ENCODE measurements at regions of chr5 and their contacts with region 1.

Region 1: GRCh38 chr5:81851481-81852178 is 100.7 kb upstream of the SSBP2 start:
- DNase-seq: peak; percentile 84
- ATAC-seq: peak; percentile 82
- H3K4me3 ChIP-seq: peak overlapping the region; percentile 42 to 56
- H3K27ac ChIP-seq: peak overlapping the region; percentile 81
- H3K4me1 ChIP-seq: peaks cover 40 to 52% of the 10 kb centered on the region in 2 experiments
- H3K27me3 ChIP-seq: no peaks in the 10 kb centered on the region
- CTCF ChIP-seq: no peak
- POLR2A ChIP-seq: peak; percentile 47
- RAD21 ChIP-seq: peak; percentile 35

Region 2: GRCh38 chr5:81425569-81425968 is 426.1 kb before region 1 on chr5:
- CTCF ChIA-PET with region 1: interaction called, 6 read pairs
- POLR2A ChIA-PET with region 1: no interaction called
- RAD21 ChIA-PET with region 1: no interaction called
- intact Hi-C with region 1: loop called (anchors 5 kb)
- DNase-seq: peak; percentile 28
- ATAC-seq: peak; percentile 67; the same call in 1 of the 2 replicates
- H3K4me3 ChIP-seq: no peak overlapping the region
- H3K27ac ChIP-seq: no peak overlapping the region
- H3K4me1 ChIP-seq: peaks cover 0 to 3% of the 10 kb centered on the region in 2 experiments; a peak in 2 of 4 replicates
- H3K27me3 ChIP-seq: no peaks in the 10 kb centered on the region
- CTCF ChIP-seq: peak; percentile 39 to 64 (median 54); a peak in 4 of 6 replicates
- POLR2A ChIP-seq: no peak
- RAD21 ChIP-seq: peak; percentile 61

Region 3: GRCh38 chr5:81506900-81507588 is 344.6 kb before region 1 on chr5:
- CTCF ChIA-PET with region 1: interaction called, 4 read pairs
- POLR2A ChIA-PET with region 1: interaction called, 5 read pairs
- RAD21 ChIA-PET with region 1: interaction called in 1 of 2 experiments, 7 read pairs
- intact Hi-C with region 1: loop called (anchors 1 kb)
- DNase-seq: peak; percentile 77
- ATAC-seq: peak; percentile 99
- H3K4me3 ChIP-seq: no peak overlapping the region
- H3K27ac ChIP-seq: no peak overlapping the region
- H3K4me1 ChIP-seq: peaks cover 0 to 5% of the 10 kb centered on the region in 2 experiments; a peak in 2 of 4 replicates
- H3K27me3 ChIP-seq: no peaks in the 10 kb centered on the region
- CTCF ChIP-seq: peak; percentile 76 to 91 (median 84)
- POLR2A ChIP-seq: no peak
- RAD21 ChIP-seq: peak; percentile 92

Region 4: GRCh38 chr5:81787474-81788242 is 64.0 kb before region 1 on chr5:
- CTCF ChIA-PET with region 1: no interaction called
- POLR2A ChIA-PET with region 1: interaction called, 3 read pairs
- RAD21 ChIA-PET with region 1: interaction called in 1 of 2 experiments, 10 read pairs
- intact Hi-C with region 1: loop called (anchors 1 kb)
- DNase-seq: no peak
- ATAC-seq: no peak
- H3K4me3 ChIP-seq: no peak overlapping the region
- H3K27ac ChIP-seq: no peak overlapping the region
- H3K4me1 ChIP-seq: peaks cover 9% of the 10 kb centered on the region in 2 experiments
- H3K27me3 ChIP-seq: no peaks in the 10 kb centered on the region
- CTCF ChIP-seq: no peak
- POLR2A ChIP-seq: no peak
- RAD21 ChIP-seq: no peak